Natural killer cell (primary cell): ENCODE measurements at regions of chr4 and their contacts with region 1.

Region 1: GRCh38 chr4:152454398-152455011 is 81.4 kb downstream of the FBXW7 start:
- DNase-seq: peak in 1 of 2 donors; percentile 11
- ATAC-seq: peak in 1 of 3 donors; percentile 28
- H3K4me3 ChIP-seq: no peak overlapping the region
- H3K4me3 Mint-ChIP-seq: peak overlapping the region; percentile 38
- H3K27ac ChIP-seq: no peak overlapping the region
- H3K27ac Mint-ChIP-seq: no peak overlapping the region
- H3K4me1 ChIP-seq: peaks cover 12% of the 10 kb centered on the region
- H3K4me1 Mint-ChIP-seq: peaks cover 39 to 47% of the 10 kb centered on the region in 2 donors
- H3K27me3 ChIP-seq: no peaks in the 10 kb centered on the region
- H3K27me3 Mint-ChIP-seq: no peaks in the 10 kb centered on the region
- CTCF ChIP-seq: peak; percentile 44

Region 2: DNA sequence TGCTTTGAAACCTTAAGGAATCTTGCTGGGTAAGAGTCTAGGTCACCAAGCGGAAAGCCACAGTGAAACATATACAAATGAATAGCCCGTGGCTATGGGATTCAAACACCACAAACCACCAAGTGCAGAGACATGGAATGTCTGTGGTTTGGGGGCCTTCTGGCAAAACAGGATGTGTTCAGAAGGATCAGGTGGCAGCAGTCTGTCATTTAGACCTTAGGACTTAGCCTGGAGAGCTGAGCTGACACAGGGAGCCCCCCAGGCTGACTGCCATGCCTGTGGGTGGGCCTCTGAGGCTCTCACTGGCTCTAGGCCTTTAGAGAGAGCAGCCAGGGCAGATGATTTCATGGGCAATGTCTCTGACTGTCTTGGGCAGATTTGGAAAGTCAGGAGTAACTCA is 144.2 kb before region 1 on chr4:
- intact Hi-C with region 1: no loop called
- DNase-seq: no peak
- ATAC-seq: no peak
- H3K4me3 ChIP-seq: no peak overlapping the region
- H3K4me3 Mint-ChIP-seq: no peak overlapping the region
- H3K27ac ChIP-seq: no peak overlapping the region
- H3K27ac Mint-ChIP-seq: no peak overlapping the region
- H3K4me1 ChIP-seq: no peaks in the 10 kb centered on the region
- H3K4me1 Mint-ChIP-seq: no peaks in the 10 kb centered on the region
- H3K27me3 ChIP-seq: no peaks in the 10 kb centered on the region
- H3K27me3 Mint-ChIP-seq: peaks cover 0 to 4% of the 10 kb centered on the region in 2 donors
- CTCF ChIP-seq: no peak

Region 3: GRCh38 chr4:152485726-152486276 is 31.3 kb after region 1 on chr4:
- intact Hi-C with region 1: loop called (anchors 2 kb)
- DNase-seq: peak in 1 of 2 donors; percentile 70
- ATAC-seq: peak; percentile 97 to 98 (median 97)
- H3K4me3 ChIP-seq: no peak overlapping the region
- H3K4me3 Mint-ChIP-seq: peak overlapping the region; percentile 50
- H3K27ac ChIP-seq: no peak overlapping the region
- H3K27ac Mint-ChIP-seq: peak overlapping the region; percentile 15 to 58
- H3K4me1 ChIP-seq: no peaks in the 10 kb centered on the region
- H3K4me1 Mint-ChIP-seq: peaks cover 43 to 71% of the 10 kb centered on the region in 2 donors
- H3K27me3 ChIP-seq: no peaks in the 10 kb centered on the region
- H3K27me3 Mint-ChIP-seq: no peaks in the 10 kb centered on the region
- CTCF ChIP-seq: no peak